ENCODE measurements at regions of chr18 and their contacts with region 1.

Region 1: DNA sequence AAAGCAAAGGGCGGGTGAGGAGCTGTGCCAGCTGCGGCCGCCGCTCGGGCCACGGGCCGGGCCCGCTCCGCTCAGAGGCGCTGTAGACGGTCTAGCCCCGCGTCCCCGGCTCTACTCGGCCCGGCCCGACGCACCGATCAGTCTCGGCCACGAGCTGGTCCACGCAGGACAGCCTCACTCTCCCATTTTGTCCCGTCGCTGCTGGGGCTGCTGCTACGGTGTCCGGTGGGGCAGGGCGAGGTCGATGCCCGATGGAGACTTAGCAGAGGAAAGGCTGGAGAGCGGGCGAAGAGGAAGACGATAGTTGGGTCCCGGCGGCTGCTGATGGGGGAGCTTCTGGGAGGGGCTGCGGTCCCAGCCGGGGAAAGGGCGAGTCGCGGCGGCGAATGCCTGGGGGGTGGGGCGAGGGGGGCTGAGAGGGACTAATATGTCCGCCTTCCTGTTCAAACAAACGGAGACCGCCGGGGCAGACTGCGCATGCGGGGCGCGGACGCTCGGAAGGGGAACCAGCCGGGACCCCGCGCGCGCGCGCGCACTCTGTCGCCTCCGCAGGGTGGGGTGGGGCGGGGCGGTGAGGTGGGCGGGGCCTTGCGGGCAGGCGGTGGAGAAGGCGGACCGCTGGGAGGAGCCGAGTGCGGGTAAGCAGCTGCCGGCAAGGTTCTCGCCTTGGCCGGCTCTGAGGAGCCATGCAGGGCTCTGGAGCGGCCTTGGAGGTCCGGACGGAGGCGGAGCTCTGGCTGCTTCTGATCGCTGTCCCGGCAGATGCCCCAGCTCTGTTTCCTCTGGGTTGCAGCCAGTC is at the start of gene ROCK1:
- DNase-seq: peak; percentile 99
- ATAC-seq: peak; percentile 86
- H3K4me3 Mint-ChIP-seq: no peak within 1 kb of the TSS
- H3K27ac Mint-ChIP-seq: peak within 1 kb of the TSS; percentile 96
- H3K4me1 Mint-ChIP-seq: peaks cover 13% of the 10 kb centered on the region
- H3K27me3 Mint-ChIP-seq: peaks cover 4% of the 10 kb centered on the region
- total RNA-seq, gene ROCK1: 70.6 to 74.3 TPM

Region 2: GRCh38 chr18:21123290-21123926 is 11.9 kb after region 1 on chr18:
- POLR2A ChIA-PET with region 1: interaction called, 14 read pairs
- DNase-seq: no peak
- ATAC-seq: peak; percentile 47
- H3K4me3 Mint-ChIP-seq: peak overlapping the region; percentile 51
- H3K27ac Mint-ChIP-seq: peak overlapping the region; percentile 66
- H3K4me1 Mint-ChIP-seq: peaks cover 5% of the 10 kb centered on the region
- H3K27me3 Mint-ChIP-seq: peaks cover 5% of the 10 kb centered on the region

Region 3: DNA sequence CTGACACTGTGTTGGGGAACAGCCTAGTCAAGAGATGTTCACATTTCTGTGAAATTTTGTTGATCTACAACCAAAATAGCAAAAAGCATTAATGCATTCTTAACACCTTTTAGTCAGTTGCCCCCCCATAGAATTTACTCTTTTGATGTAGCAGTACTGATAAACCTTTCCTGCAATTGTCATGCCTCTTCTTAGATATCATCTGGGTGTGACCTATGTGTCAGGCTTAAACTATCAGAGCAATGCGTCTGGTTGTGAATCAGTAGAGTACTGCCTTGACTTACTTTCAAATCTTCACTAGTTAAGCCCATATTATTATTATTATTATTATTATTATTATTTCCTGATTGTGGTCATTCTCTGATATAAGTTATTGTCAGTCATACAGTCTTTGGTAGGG is 192.4 kb after region 1 on chr18:
- POLR2A ChIA-PET with region 1: no interaction called
- DNase-seq: no peak
- ATAC-seq: no peak
- H3K4me3 Mint-ChIP-seq: no peak overlapping the region
- H3K27ac Mint-ChIP-seq: no peak overlapping the region
- H3K4me1 Mint-ChIP-seq: no peaks in the 10 kb centered on the region
- H3K27me3 Mint-ChIP-seq: peaks cover 6% of the 10 kb centered on the region

Region 4: DNA sequence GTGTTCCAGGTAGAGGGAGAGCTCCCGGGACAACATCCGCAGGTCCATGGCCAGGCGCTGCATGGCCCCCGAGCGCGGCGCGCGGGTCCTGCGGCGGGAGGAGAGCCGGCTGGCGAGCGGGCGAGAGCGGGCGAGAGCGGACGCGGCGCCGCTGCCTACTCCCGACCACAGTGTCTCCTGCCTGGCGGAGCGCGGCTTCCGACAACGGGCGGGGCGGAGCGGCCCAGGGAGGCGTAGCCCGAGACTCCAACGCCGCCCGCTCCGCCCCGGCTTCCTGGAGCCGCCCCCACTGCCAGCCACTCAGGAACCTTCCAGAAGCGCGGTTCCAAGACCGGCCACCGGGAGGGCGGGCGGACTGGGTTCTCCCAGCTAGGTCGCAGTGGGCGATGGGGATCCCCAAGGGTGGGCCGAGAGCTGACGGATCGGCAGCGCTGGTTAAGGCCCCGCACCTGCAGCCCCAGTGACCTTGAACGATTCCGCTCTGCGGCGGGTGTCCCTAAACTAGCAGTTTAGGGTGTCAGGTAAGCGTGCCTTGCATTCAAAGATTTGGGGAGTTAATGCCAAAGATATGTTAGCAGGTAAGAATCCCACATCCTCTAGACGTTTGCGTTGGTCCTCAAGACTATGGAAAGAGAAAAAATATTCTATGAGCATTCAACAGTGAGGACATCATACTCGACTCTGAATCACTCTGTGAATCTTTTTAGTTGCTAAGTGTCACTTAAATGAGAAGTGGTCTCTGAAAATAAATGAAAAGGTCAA is 593.2 kb after region 1 on chr18 and contains the start of gene ABHD3:
- POLR2A ChIA-PET with region 1: no interaction called
- DNase-seq: peak; percentile 94
- ATAC-seq: peak; percentile 96
- H3K4me3 Mint-ChIP-seq: peak within 1 kb of the TSS; percentile 98
- H3K27ac Mint-ChIP-seq: peak within 1 kb of the TSS; percentile 94
- H3K4me1 Mint-ChIP-seq: peaks cover 27% of the 10 kb centered on the region
- H3K27me3 Mint-ChIP-seq: no peaks in the 10 kb centered on the region
- total RNA-seq, gene ABHD3: 50.7 to 52.8 TPM

Measured in activated naive CD8-positive, alpha-beta T cell treated with anti-CD3 and anti-CD28 coated beads, Interleukin-2, amount 10 ng/mL, durations not matched to agents 7 days and 5 days (primary cell).